BJ (cell line): ENCODE measurements at regions of chr12 and their contacts with region 1.

Region 1: DNA sequence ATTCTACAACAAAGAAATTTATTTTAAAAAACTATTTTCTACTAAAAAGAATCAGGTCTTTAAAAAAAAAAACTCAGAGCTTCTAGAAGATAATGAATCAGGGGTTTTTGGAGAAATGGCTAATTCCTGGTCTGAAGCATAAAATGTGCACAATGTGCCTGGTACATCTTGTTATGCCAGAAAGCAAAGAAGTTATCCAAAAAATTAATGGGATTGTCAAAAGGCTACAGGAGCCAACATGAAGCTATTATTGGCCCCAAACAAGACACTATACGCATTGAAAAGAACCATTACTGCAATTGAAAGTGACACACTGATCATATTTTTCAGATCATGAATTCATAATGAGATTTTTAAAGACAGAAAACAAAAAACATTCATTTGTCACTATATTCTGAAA is 19.3 kb upstream of the TUBA1A start:
- DNase-seq: no peak
- H3K4me3 ChIP-seq: no peak overlapping the region
- H3K27me3 ChIP-seq: no peaks in the 10 kb centered on the region
- CTCF ChIP-seq: no peak

Region 2: GRCh38 chr12:49188914-49189367 is 19.2 kb before region 1 on chr12 and contains the start of gene TUBA1A:
- CTCF ChIA-PET with region 1: no interaction called
- POLR2A ChIA-PET with region 1: interaction called, 13 read pairs
- DNase-seq: peak; percentile 98
- H3K4me3 ChIP-seq: peak within 1 kb of the TSS; percentile 97
- H3K27me3 ChIP-seq: no peaks in the 10 kb centered on the region
- CTCF ChIP-seq: no peak
- polyA plus RNA-seq, gene TUBA1A: 616 and 820 TPM in 2 replicates